ENCODE measurements at regions of chrX and their contacts with region 1.

Region 1: GRCh38 chrX:154373340-154374306 is 811 bp downstream of the FLNA start:
- DNase-seq: no peak
- CTCF ChIP-seq: peak; percentile 42

Region 2: GRCh38 chrX:153735274-153735673 is 638.3 kb before region 1 on chrX:
- CTCF ChIA-PET with region 1: no interaction called
- POLR2A ChIA-PET with region 1: no interaction called
- DNase-seq: no peak
- CTCF ChIP-seq: no peak

Region 3: GRCh38 chrX:153845842-153846241 is 527.8 kb before region 1 on chrX:
- CTCF ChIA-PET with region 1: no interaction called
- POLR2A ChIA-PET with region 1: no interaction called
- DNase-seq: no peak
- CTCF ChIP-seq: no peak

Region 4: DNA sequence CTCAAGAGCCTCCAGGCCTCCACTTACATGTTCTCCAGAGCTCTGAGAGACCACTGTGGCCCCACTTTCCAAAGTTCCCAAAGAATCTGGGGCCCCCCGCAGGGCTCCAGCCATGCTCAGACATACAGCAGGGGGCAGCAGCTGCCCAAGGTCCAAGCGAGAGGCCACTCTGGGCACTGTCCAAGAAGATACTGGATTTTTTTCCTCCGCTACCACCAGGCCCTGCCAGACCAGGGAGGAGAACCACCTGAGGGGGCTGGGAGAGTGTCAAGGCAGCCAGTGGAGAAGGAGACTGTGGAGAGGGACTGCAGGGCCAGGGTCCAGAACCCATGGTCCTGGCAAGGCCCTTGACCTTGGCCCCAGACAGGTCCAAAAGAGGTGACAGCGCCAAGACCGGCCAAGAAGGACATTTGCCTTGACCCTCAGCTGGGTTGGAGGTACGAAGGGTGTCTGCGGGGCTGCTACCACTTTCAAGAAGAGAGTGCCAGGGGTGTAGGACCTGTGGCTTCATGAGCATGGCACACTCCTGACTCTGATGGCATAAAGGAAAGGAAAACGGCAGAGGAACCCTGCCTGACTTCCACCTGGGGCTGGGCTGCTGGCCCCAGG is 10.8 kb after region 1 on chrX:
- CTCF ChIA-PET with region 1: interaction called, 24 read pairs
- POLR2A ChIA-PET with region 1: interaction called, 5 read pairs
- DNase-seq: no peak
- CTCF ChIP-seq: no peak

Region 5: GRCh38 chrX:154526901-154527675 is 153.5 kb after region 1 on chrX:
- CTCF ChIA-PET with region 1: interaction called, 61 read pairs
- POLR2A ChIA-PET with region 1: no interaction called
- DNase-seq: peak; percentile 67
- CTCF ChIP-seq: peak; percentile 43

Region 6: DNA sequence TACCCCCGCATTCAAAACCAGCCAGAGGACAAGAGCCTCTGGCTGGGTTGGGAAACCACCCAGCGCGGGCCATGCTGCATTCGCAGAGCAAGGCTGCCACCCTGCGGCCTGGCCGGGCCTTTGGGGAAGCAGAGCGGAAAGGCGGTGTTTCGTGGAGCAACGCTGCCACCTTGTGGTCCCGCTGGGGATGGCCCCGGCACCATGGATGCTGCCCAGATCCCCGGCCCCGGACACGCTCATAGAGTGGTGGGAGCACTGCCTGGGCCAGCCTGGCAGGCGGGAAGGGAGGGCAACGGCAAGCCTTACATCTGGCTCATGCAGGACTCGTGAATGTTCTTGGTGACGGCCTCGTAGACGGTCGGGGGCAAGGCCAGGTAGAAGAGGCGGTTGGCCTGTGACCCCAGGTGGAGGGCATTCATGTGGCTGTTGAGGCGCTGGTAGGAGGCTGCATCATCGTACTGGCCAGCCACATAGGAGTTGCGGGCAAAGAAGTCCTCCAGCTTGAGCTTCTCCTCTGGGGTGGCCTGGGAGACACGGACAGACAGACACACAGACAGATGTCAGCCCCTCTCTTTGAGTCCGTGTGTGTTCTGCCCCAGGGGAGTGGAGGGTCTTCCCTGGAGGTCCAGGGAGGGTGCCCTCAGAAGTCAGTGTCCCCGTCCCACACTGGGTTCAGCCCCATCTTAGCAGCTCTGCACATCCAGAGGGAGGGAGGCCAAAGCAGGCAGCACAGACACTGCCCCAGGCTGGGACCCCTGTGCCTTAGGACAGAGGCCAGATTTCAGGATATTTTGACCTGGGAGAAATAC is 161.4 kb after region 1 on chrX:
- CTCF ChIA-PET with region 1: interaction called, 61 read pairs
- POLR2A ChIA-PET with region 1: no interaction called
- DNase-seq: peak; percentile 90
- CTCF ChIP-seq: peak; percentile 98

Region 7: GRCh38 chrX:154541724-154542467 is 168.3 kb after region 1 on chrX:
- CTCF ChIA-PET with region 1: interaction called, 61 read pairs
- POLR2A ChIA-PET with region 1: interaction called, 4 read pairs
- DNase-seq: no peak
- CTCF ChIP-seq: no peak